Body of pancreas (tissue), 4 donors: ENCODE measurements at regions of chr20 and their contacts with region 1.

Region 1: GRCh38 chr20:17617551-17618223 is 47.8 kb downstream of the DSTN start:
- DNase-seq: peak; percentile 62 to 85 (median 70)
- ATAC-seq: peak; percentile 29
- H3K4me3 ChIP-seq: no peak overlapping the region
- H3K27ac ChIP-seq: peak overlapping the region in 3 of 4 donors; percentile 31 to 83 (median 44)
- H3K4me1 ChIP-seq: peaks cover 58% of the 10 kb centered on the region
- H3K27me3 ChIP-seq: no peaks in the 10 kb centered on the region
- CTCF ChIP-seq: peak; percentile 27 to 83 (median 63)
- POLR2A ChIP-seq: no peak

Region 2: GRCh38 chr20:17403461-17403860 is 214.2 kb before region 1 on chr20:
- intact Hi-C with region 1: no loop called
- DNase-seq: no peak
- ATAC-seq: no peak
- H3K4me3 ChIP-seq: no peak overlapping the region
- H3K27ac ChIP-seq: no peak overlapping the region
- H3K4me1 ChIP-seq: no peaks in the 10 kb centered on the region
- H3K27me3 ChIP-seq: no peaks in the 10 kb centered on the region
- CTCF ChIP-seq: no peak
- POLR2A ChIP-seq: no peak

Region 3: GRCh38 chr20:17536944-17537444 is 80.7 kb before region 1 on chr20:
- intact Hi-C with region 1: loop called (anchors 5 kb)
- DNase-seq: peak; percentile 78 to 86 (median 82)
- ATAC-seq: peak; percentile 97
- H3K4me3 ChIP-seq: no peak overlapping the region
- H3K27ac ChIP-seq: peak overlapping the region in 1 of 4 donors; percentile 13
- H3K4me1 ChIP-seq: peaks cover 8% of the 10 kb centered on the region
- H3K27me3 ChIP-seq: no peaks in the 10 kb centered on the region
- CTCF ChIP-seq: peak; percentile 77 to 99 (median 98)
- POLR2A ChIP-seq: no peak